Right cardiac atrium (tissue), 5 donors: ENCODE measurements at regions of chr11 and their contacts with region 1.

Region 1: DNA sequence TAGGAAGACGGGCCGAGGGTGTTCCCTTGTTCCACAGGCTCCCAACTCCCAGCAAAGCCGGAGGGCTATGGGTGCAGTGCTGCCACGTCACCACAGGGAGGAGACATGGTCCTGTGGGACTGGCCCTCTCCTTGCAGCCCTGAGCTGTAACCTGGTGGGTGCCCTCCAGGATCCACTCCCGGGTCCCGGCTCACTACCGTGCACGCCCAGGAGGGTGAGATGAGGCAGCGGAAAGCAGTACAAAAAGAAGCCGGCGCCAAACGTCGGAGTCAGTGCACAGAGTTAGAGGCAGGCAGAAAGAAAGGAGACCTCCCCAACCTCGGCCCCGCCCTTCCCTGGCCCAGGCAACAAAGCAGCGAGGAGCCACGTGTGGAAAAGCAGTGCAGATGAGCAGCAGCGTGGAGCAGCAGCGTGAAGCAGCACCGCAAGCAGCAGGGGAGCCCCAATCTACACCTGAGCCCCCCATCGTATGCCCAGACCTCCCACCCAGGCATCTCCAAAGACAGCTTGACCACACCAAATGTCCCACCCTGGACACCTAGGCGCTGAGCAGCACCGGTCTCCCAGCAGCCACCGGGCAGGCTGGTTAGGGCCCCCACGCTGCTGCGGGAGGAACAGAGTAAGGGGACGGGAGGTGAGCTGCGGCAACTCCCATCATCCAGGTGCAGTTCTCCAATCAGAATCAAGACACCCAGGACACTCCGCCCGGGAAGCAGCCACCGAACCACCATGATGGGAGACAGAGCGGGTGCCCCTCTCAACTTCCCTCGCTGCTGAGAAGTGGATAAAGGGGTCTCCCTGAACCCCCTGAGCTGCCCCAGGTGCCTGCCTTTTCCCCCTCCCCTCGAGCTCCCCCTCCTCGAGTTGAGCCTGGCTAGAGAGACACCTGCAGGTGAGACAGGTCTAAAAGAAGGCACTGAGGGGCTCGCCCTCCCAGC is 28.8 kb downstream of the IGSF9B start:
- DNase-seq: peak; percentile 71 to 87 (median 78)
- ATAC-seq: peak; percentile 81 to 89
- H3K4me3 ChIP-seq: no peak overlapping the region
- H3K27ac ChIP-seq: no peak overlapping the region
- H3K4me1 ChIP-seq: no peaks in the 10 kb centered on the region
- H3K27me3 ChIP-seq: no peaks in the 10 kb centered on the region

Region 2: GRCh38 chr11:133867456-133867855 is 60.5 kb before region 1 on chr11:
- intact Hi-C with region 1: no loop called
- DNase-seq: no peak
- ATAC-seq: no peak
- H3K4me3 ChIP-seq: no peak overlapping the region
- H3K27ac ChIP-seq: no peak overlapping the region
- H3K4me1 ChIP-seq: no peaks in the 10 kb centered on the region
- H3K27me3 ChIP-seq: no peaks in the 10 kb centered on the region

Region 3: GRCh38 chr11:134139873-134140331 is 211.9 kb after region 1 on chr11:
- intact Hi-C with region 1: loop called (anchors 5 to 10 kb)
- DNase-seq: peak; percentile 40 to 73 (median 64)
- ATAC-seq: peak; percentile 87 to 89
- H3K4me3 ChIP-seq: no peak overlapping the region
- H3K27ac ChIP-seq: no peak overlapping the region
- H3K4me1 ChIP-seq: no peaks in the 10 kb centered on the region
- H3K27me3 ChIP-seq: no peaks in the 10 kb centered on the region